CD14-positive monocyte (primary cell): ENCODE measurements at regions of chr2 and their contacts with region 1.

Region 1: DNA sequence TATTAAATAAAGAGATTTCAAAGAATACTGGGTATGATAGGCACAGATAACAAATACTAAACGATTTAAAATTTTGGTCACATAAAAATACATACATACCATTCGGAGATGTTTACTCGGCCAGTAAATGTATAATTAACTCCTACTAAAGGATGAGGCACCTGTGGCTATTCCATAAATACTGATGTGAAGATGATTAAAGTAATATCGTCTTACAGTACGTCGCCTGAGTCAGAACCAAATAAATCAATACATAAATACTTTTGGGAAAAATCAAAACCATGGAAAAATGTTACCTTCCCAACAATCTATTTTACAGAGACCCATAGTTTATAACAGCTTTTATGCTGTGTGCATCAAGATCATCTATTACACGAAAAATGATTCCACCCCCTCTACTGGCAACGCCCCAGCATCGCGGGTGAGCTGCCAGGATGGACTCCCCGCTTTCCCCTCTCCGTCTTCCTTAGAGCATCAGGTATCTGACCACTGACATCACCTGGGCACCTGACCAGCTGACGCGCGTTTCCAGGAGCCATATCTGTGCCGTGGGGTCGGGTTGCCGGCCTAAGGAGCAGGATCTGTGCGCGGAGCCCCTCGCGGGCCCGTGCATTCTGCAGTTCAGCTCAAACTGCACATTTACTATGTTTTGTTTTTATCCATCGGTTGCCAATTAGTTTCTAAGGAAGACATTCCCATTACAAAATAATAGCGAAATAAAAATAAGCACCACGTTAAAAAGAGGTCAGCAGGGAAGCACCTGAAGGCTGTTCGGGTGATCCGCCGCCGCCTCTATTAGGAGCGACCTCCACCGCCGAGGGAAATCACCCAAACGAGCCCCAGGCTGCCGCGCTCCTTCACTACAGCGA is 901 bp downstream of the ICA1L start:
- DNase-seq: peak; percentile 19 to 42 (median 34)
- H3K4me3 ChIP-seq: peak overlapping the region; percentile 50 to 88 (median 69)
- H3K4me3 Mint-ChIP-seq: peak overlapping the region; percentile 90 to 94
- H3K27ac ChIP-seq: no peak overlapping the region
- H3K27ac Mint-ChIP-seq: peak overlapping the region in 4 of 7 donors; percentile 12 to 73 (median 29)
- H3K4me1 ChIP-seq: peaks cover 4 to 8% of the 10 kb centered on the region in 2 donors
- H3K4me1 Mint-ChIP-seq: peaks cover 12% of the 10 kb centered on the region
- H3K27me3 ChIP-seq: peaks cover 0 to 6% of the 10 kb centered on the region in 2 donors
- H3K27me3 Mint-ChIP-seq: peaks cover 11 to 13% (median 12%) of the 10 kb centered on the region in 3 donors
- CTCF ChIP-seq: peak; percentile 67

Region 2: GRCh38 chr2:202564226-202564625 is 306.4 kb before region 1 on chr2:
- intact Hi-C with region 1: loop called in 1 of 2 experiments (anchors 10 kb)
- DNase-seq: no peak
- H3K4me3 ChIP-seq: no peak overlapping the region
- H3K4me3 Mint-ChIP-seq: no peak overlapping the region
- H3K27ac ChIP-seq: no peak overlapping the region
- H3K27ac Mint-ChIP-seq: no peak overlapping the region
- H3K4me1 ChIP-seq: no peaks in the 10 kb centered on the region
- H3K4me1 Mint-ChIP-seq: no peaks in the 10 kb centered on the region
- H3K27me3 ChIP-seq: no peaks in the 10 kb centered on the region
- H3K27me3 Mint-ChIP-seq: peaks cover 0 to 1% (median 0%) of the 10 kb centered on the region in 3 donors
- CTCF ChIP-seq: no peak

Region 3: GRCh38 chr2:202831242-202832220 is 39.1 kb before region 1 on chr2:
- intact Hi-C with region 1: loop called in 1 of 2 experiments (anchors 5 kb)
- DNase-seq: peak; percentile 9 to 25 (median 13)
- H3K4me3 ChIP-seq: no peak overlapping the region
- H3K4me3 Mint-ChIP-seq: no peak overlapping the region
- H3K27ac ChIP-seq: no peak overlapping the region
- H3K27ac Mint-ChIP-seq: no peak overlapping the region
- H3K4me1 ChIP-seq: peaks cover 3 to 4% of the 10 kb centered on the region in 2 donors
- H3K4me1 Mint-ChIP-seq: peaks cover 9% of the 10 kb centered on the region
- H3K27me3 ChIP-seq: no peaks in the 10 kb centered on the region
- H3K27me3 Mint-ChIP-seq: peaks cover 0 to 3% (median 0%) of the 10 kb centered on the region in 3 donors
- CTCF ChIP-seq: peak; percentile 40